ENCODE measurements at regions of chr21 and their contacts with region 1.

Region 1: DNA sequence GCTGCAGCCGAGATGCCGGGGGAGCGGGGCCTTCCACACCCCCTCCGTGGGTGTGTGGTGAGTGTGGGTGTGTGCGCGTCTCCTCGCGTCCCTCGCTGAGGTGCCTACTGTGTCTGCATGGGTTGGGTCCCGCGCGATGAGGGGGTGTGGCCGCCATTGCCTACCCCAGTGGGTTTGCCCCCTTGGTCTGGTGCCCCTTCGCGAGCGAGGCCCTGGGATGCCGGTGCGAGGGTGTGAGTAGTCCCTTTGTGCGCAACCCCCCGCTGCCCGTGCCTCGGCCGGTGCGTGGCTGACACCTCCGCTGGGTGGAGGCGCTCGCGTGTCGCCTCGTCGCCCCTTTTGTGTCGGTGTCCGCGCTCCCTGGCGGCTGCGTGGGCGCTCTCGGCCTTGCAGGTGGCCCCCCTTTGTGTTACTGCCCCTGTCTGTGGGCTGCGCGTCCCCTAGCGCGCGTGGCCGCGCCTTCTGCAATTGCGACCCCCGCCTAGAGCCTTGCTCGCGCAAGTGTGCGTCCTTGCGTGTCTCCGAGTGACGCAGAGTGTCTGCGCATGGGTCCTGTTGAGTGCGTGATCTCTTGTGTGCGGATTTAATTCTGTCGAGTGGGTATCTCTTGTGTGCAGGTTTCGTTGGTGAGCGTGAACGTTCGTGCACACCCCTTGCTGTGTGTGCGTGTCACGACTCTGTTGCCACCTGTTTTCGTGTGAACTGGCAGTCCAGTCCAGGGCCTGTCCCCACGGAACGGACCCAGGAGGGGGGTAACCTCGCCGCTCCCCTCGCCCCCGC is 553 bp downstream of the TTC3 start:
- DNase-seq: peak; percentile 20
- H3K4me3 Mint-ChIP-seq: peak overlapping the region; percentile 96
- H3K27ac Mint-ChIP-seq: peak overlapping the region; percentile 85
- H3K4me1 Mint-ChIP-seq: peaks cover 19% of the 10 kb centered on the region
- H3K27me3 Mint-ChIP-seq: no peaks in the 10 kb centered on the region
- CTCF ChIP-seq: no peak

Region 2: GRCh38 chr21:37087188-37087587 is 13.6 kb after region 1 on chr21:
- CTCF ChIA-PET with region 1: no interaction called
- intact Hi-C with region 1: loop called (anchors 1 kb)
- DNase-seq: peak; percentile 10
- H3K4me3 Mint-ChIP-seq: no peak overlapping the region
- H3K27ac Mint-ChIP-seq: no peak overlapping the region
- H3K4me1 Mint-ChIP-seq: peaks cover 17% of the 10 kb centered on the region
- H3K27me3 Mint-ChIP-seq: no peaks in the 10 kb centered on the region
- CTCF ChIP-seq: no peak